Common myeloid progenitor, CD34-positive (primary cell): ENCODE measurements at regions of chr1 and their contacts with region 1.

Region 1: GRCh38 chr1:6343506-6344405 is 49.8 kb downstream of the ACOT7 start:
- DNase-seq: peak; percentile 59 to 80 (median 75)
- H3K4me3 ChIP-seq: no peak overlapping the region
- H3K27ac ChIP-seq: no peak overlapping the region
- H3K4me1 ChIP-seq: peaks cover 0 to 11% (median 9%) of the 10 kb centered on the region in 4 experiments
- H3K27me3 ChIP-seq: no peaks in the 10 kb centered on the region

Region 2: GRCh38 chr1:6393400-6394187 is 49.8 kb after region 1 on chr1 and contains the start of gene ACOT7:
- CTCF ChIA-PET with region 1: interaction called, 30 read pairs
- POLR2A ChIA-PET with region 1: no interaction called
- DNase-seq: peak; percentile 80 to 92 (median 89)
- H3K4me3 ChIP-seq: peak within 1 kb of the TSS; percentile 52 to 80 (median 66)
- H3K27ac ChIP-seq: peak within 1 kb of the TSS; percentile 54 to 82
- H3K4me1 ChIP-seq: peaks cover 4 to 25% (median 22%) of the 10 kb centered on the region in 4 experiments
- H3K27me3 ChIP-seq: no peaks in the 10 kb centered on the region